Activated T-helper 1 cell treated with anti-CD3 and anti-CD28 coated beads, Interleukin-12 subunit alpha, Interleukin-12 subunit beta, Interleukin-2, Interleukin-4 antibody, amounts not matched to agents 30 ng/mL and 10 ng/mL and 1 ng/mL, durations not matched to agents 14 hours and 24 hours and 36 hours (primary cell): ENCODE measurements at regions of chr10 and their contacts with region 1.

Region 1: GRCh38 chr10:16817125-16818019 is at the start of gene RSU1:
- DNase-seq: peak; percentile 100
- H3K4me3 Mint-ChIP-seq: peak within 1 kb of the TSS; percentile 93
- H3K27ac Mint-ChIP-seq: peak within 1 kb of the TSS; percentile 91
- H3K4me1 Mint-ChIP-seq: peaks cover 42% of the 10 kb centered on the region
- H3K27me3 Mint-ChIP-seq: peaks cover 10% of the 10 kb centered on the region
- total RNA-seq, gene RSU1: 46.9 and 47.5 TPM in 2 replicates

Region 2: DNA sequence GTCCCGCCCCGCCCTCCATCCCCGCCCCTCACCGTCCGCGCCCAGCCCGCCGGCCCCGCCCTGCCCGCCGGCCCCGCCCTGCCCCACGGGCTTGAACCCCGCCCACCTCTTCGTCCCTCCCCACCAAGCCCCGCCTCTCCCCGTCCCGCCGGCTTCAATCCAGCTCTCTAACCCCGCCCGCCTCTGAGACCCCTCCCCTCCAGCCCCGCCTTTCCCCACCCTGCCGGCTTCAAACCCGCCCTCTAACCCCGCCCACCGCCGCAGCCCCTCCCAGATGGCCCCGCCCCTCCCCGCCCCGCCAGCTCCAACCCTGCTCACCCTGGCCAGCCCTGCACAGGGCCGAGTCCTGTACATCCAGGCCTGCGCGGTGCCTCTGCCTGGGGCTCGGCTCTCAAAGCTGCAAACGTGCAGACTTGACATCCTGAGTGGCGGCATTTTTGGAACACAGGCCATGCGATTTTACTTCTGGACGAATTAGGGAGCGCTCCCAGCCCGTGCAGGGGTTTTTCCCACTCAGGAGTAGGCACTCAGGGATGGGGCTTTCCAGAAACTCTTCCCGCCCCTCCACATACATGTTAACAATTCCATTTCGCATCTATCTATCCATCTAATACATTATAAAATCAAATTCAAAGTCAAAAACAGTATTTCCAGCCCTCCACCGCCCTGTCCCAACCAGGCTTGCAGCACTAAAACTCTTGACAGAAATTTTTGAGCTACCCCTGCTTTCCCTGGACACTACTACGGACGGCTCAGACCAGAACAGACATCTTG is 1648.4 kb before region 1 on chr10:
- intact Hi-C with region 1: loop called (anchors 2 kb)
- DNase-seq: peak; percentile 84
- H3K4me3 Mint-ChIP-seq: peak overlapping the region; percentile 55
- H3K27ac Mint-ChIP-seq: peak overlapping the region; percentile 74
- H3K4me1 Mint-ChIP-seq: peaks cover 51% of the 10 kb centered on the region
- H3K27me3 Mint-ChIP-seq: peaks cover 5% of the 10 kb centered on the region

Region 3: DNA sequence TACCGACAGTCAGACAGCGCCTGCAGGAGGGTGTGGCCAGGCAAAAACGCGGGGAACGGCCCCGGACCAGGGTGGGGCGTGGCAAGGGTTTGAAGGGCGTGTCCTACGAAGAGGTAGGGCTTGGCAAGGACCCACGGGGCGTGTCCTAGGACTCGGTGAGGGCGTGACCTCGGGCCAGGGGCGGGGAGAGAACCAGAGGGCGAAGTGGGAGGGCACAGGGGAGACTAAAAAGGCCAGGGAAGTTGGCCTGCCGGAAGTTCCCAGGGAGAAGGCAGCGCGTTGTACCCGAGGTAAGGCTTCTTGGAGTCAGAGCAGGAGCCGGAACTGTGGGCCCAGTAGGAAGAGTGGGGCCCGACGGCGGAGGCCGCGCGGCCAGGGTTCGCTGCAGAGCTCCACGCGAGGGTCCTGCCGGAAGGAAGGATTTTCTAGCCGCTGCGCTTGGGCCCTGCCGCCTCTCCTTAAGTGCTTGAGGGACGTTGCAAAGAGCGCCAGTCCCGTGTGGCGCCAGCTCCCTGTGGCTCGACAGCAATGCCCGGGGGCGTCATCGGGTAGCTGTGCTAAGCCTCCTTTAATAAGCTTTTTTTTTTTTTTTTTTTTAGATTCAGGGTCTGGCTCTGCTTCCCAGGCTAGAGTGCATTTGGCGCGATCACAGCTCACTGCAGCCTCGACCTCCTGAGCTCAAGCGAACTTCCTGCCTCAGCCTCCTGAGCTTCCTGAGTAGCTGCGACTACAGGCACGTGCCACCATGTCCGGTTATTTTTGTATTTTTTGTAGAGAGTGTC is 380.4 kb before region 1 on chr10 and contains the start of gene PTER:
- intact Hi-C with region 1: loop called (anchors 1 kb)
- DNase-seq: peak; percentile 98
- H3K4me3 Mint-ChIP-seq: peak within 1 kb of the TSS; percentile 88
- H3K27ac Mint-ChIP-seq: peak within 1 kb of the TSS; percentile 88
- H3K4me1 Mint-ChIP-seq: peaks cover 40% of the 10 kb centered on the region
- H3K27me3 Mint-ChIP-seq: peaks cover 9% of the 10 kb centered on the region
- total RNA-seq, gene PTER: 10.7 and 12.6 TPM in 2 replicates

Region 4: GRCh38 chr10:16787361-16787791 is 30.0 kb before region 1 on chr10:
- intact Hi-C with region 1: loop called (anchors 1 kb)
- DNase-seq: peak; percentile 49
- H3K4me3 Mint-ChIP-seq: peak overlapping the region; percentile 49
- H3K27ac Mint-ChIP-seq: peak overlapping the region; percentile 80
- H3K4me1 Mint-ChIP-seq: peaks cover 51% of the 10 kb centered on the region
- H3K27me3 Mint-ChIP-seq: no peaks in the 10 kb centered on the region

Region 5: GRCh38 chr10:16828114-16828568 is 10.8 kb after region 1 on chr10:
- intact Hi-C with region 1: no loop called
- DNase-seq: peak; percentile 48
- H3K4me3 Mint-ChIP-seq: no peak overlapping the region
- H3K27ac Mint-ChIP-seq: no peak overlapping the region
- H3K4me1 Mint-ChIP-seq: peaks cover 7% of the 10 kb centered on the region
- H3K27me3 Mint-ChIP-seq: peaks cover 6% of the 10 kb centered on the region

Region 6: GRCh38 chr10:17023386-17024298 is 206.3 kb after region 1 on chr10:
- intact Hi-C with region 1: loop called (anchors 1 kb)
- DNase-seq: peak; percentile 77
- H3K4me3 Mint-ChIP-seq: peak overlapping the region; percentile 61
- H3K27ac Mint-ChIP-seq: peak overlapping the region; percentile 99
- H3K4me1 Mint-ChIP-seq: peaks cover 61% of the 10 kb centered on the region
- H3K27me3 Mint-ChIP-seq: peaks cover 4% of the 10 kb centered on the region

Region 7: GRCh38 chr10:17216217-17216900 is 399.0 kb after region 1 on chr10:
- intact Hi-C with region 1: loop called (anchors 1 kb)
- DNase-seq: peak; percentile 34
- H3K4me3 Mint-ChIP-seq: peak overlapping the region; percentile 45
- H3K27ac Mint-ChIP-seq: peak overlapping the region; percentile 98
- H3K4me1 Mint-ChIP-seq: peaks cover 51% of the 10 kb centered on the region
- H3K27me3 Mint-ChIP-seq: no peaks in the 10 kb centered on the region

Region 8: GRCh38 chr10:18659120-18659818 is 1841.9 kb after region 1 on chr10 and contains the start of gene ARL5B:
- intact Hi-C with region 1: loop called (anchors 1 kb)
- DNase-seq: peak; percentile 92
- H3K4me3 Mint-ChIP-seq: peak within 1 kb of the TSS; percentile 100
- H3K27ac Mint-ChIP-seq: peak within 1 kb of the TSS; percentile 98
- H3K4me1 Mint-ChIP-seq: peaks cover 38% of the 10 kb centered on the region
- H3K27me3 Mint-ChIP-seq: no peaks in the 10 kb centered on the region
- total RNA-seq, gene ARL5B: 14.4 and 15.2 TPM in 2 replicates